Pancreas (tissue), 10 donors: ENCODE measurements at regions of chr12 and their contacts with region 1.

Region 1: DNA sequence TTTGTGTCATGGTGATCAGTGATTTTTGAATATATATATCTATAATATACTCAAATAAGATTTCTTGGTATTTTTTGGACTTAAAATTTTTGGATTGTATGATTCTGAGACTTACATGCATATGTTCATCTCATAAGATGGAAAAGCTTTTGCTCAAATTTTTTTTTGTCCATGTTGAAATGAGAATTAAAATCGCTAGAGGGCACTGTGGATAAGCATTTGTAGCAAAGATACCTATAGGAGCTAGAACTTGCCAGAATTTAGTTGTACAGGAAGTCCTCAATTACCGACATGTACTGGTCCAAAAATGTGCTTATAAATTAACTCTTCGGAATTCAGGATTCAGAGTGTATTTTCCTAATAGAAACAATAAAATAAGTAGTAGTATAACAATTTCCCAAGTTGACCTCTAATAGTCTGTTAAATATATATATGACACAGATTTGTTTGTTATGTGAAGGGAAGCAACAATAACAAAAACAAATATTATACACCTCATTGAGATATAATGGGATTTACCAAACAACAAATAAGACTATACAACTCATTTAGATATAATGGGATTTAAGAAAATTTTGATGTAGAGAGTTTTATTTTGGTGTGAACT is 179.6 kb downstream of the TMEM117 start:
- DNase-seq: no peak
- ATAC-seq: peak in 3 of 4 donors; percentile 71 to 79 (median 71)
- H3K4me3 ChIP-seq: no peak overlapping the region
- H3K27ac ChIP-seq: no peak overlapping the region
- H3K4me1 ChIP-seq: no peaks in the 10 kb centered on the region
- H3K27me3 ChIP-seq: no peaks in the 10 kb centered on the region
- CTCF ChIP-seq: peak; percentile 9 to 39 (median 32)

Region 2: DNA sequence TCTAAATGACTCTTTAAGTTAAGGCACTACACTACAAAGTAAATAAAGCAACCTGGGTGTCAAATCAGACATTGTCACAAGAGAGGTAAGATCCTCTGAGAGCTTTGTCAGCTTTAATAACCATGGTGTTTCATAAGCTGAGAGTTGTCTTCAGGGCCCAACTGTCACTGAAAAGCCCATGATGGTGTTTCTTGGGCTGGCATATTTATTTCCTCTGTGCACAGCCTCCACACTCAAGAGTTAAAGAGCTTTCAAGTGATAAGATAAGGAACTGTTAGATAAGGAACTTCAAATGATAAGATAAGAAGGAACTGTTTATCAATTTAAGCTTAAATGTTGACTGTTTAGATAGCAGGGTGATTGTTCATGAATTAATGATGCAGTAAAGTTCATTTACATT is 315.8 kb after region 1 on chr12:
- intact Hi-C with region 1: no loop called
- DNase-seq: no peak
- ATAC-seq: no peak
- H3K4me3 ChIP-seq: no peak overlapping the region
- H3K27ac ChIP-seq: no peak overlapping the region
- H3K4me1 ChIP-seq: no peaks in the 10 kb centered on the region
- H3K27me3 ChIP-seq: no peaks in the 10 kb centered on the region
- CTCF ChIP-seq: no peak

Region 3: GRCh38 chr12:44929236-44929885 is 913.9 kb after region 1 on chr12:
- intact Hi-C with region 1: loop called in 1 of 3 experiments (anchors 10 kb)
- DNase-seq: no peak
- ATAC-seq: no peak
- H3K4me3 ChIP-seq: no peak overlapping the region
- H3K27ac ChIP-seq: no peak overlapping the region
- H3K4me1 ChIP-seq: no peaks in the 10 kb centered on the region
- H3K27me3 ChIP-seq: no peaks in the 10 kb centered on the region
- CTCF ChIP-seq: no peak